ENCODE measurements at regions of chr1 and their contacts with region 1.

Region 1: DNA sequence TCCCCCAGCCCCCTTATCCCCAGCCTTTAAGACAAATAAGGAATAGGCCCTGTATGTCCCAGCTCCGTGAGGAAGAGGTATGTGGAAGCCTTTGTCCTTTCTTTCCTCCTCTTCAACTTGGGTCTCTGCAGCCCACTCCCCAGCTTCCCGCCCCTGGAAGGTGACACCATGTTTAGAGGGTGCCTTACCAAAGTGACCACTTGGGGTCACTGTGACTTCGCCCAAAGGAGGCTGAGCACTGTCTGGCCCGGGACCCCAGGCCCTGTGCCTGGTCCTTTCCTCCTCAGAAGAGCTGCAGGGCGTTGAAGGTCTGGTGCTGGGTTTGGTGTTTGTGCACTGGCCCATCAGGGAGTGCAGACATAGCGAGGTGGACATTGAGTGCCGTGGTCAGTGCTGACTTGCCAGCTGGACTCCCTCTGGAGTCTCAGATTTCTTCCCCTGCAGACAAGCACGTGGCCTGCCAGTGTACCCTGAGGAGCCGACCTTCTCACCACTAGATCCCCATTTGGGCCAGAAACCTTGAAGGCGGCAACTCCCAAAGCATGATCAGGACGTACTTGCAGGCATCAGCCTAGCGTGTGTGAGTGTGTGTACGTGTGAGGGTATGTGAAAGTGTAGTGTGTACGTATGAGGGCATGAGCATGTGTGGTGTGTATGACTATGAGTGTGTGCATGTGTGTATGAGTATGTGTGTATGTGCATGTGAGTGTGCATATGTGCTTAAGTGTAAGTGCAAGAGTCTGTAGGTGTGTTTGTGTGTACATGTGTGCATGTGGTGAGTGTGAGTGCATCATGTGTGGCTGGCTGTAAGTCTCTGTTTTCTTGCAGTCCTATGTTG is 181.4 kb upstream of the KIAA0040 start:
- DNase-seq: no peak
- H3K4me3 ChIP-seq: no peak overlapping the region
- H3K27ac ChIP-seq: no peak overlapping the region
- H3K4me1 ChIP-seq: no peaks in the 10 kb centered on the region
- H3K27me3 ChIP-seq: no peaks in the 10 kb centered on the region
- CTCF ChIP-seq: peak; percentile 51 to 84

Region 2: DNA sequence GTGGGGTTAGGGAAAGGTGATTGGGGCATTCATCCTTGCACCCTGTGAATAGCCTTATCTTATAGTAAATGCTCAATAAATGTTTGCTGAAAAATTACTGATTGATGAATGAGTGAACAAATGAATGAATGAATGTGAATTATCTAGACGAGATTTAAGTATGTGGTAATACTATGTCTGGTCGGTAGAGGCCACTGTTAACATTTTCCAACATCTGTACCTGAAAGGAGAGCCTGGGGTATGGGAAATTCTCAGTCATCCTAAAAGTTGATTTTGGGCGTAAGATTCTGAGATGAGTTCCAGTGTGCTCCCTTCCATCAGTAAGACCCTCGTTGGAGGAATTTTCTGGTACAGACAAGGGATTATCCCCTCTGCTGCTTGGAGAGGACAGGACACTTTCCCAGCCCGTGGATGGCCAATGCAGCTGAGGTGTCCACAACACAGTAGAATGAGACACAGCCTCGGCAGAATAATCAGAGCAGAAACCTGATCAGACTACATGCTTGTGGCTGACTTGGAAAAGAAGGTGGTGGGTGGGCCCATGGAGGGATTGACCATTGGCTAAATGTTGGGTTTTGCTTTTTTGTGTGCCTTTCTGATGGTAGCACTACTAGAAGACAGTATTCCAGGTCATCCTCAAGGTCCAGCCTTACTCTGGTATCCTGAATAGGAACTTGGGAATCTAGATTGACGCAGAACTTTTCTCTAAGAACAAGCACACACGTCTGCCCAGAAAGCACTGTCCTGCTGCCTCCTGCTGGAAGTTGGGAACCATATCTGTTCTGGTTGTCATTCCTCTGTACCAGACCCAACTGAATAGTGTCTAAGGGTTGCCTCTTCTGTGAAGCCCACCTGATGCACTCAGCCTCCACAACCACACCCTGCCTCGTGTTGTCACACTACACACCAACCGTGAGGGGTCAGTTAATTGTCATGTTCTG is 107.4 kb after region 1 on chr1:
- CTCF ChIA-PET with region 1: no interaction called
- dilution Hi-C with region 1: no loop called
- in situ Hi-C with region 1: no loop called
- intact Hi-C with region 1: loop called (anchors 2 kb)
- DNase-seq: peak; percentile 9
- H3K4me3 ChIP-seq: no peak overlapping the region
- H3K27ac ChIP-seq: no peak overlapping the region
- H3K4me1 ChIP-seq: no peaks in the 10 kb centered on the region
- H3K27me3 ChIP-seq: peaks cover 7% of the 10 kb centered on the region
- CTCF ChIP-seq: peak; percentile 51 to 63

Region 3: DNA sequence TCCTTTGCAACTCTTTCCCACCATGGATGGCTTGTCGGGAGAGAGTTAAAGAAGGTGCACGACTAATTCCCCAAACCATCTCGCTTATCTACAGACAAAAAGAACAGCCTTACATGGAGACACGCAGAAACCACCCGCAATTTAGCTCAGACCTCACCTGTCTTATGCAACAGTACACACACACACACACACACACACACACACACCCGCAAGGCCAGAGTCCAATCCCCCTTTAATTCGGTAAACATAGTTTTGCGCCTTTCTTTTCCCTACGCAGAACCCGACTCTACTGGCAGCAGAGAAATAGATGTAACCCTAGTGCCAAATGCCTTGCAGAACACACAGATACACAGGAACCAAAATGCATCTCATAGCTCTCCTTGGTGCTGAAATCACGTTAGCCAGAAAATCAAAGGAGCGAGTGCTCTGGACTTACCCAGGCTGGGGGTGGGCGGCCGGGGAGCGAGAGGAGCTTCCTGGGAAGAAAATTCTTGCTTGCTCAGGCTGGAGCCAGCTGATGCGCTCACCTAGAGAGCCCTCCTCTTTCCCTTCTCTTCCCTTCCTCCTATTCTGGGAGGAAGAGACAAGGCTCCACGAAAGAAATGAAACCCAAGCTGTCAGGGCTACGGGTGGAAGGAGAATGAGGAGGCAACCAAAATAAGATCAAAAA is 368.9 kb after region 1 on chr1:
- CTCF ChIA-PET with region 1: no interaction called
- dilution Hi-C with region 1: no loop called
- in situ Hi-C with region 1: no loop called
- intact Hi-C with region 1: loop called (anchors 5 kb)
- DNase-seq: peak; percentile 45
- H3K4me3 ChIP-seq: no peak overlapping the region
- H3K27ac ChIP-seq: no peak overlapping the region
- H3K4me1 ChIP-seq: no peaks in the 10 kb centered on the region
- H3K27me3 ChIP-seq: no peaks in the 10 kb centered on the region
- CTCF ChIP-seq: no peak

Region 4: GRCh38 chr1:175887981-175888433 is 514.0 kb after region 1 on chr1:
- CTCF ChIA-PET with region 1: no interaction called
- dilution Hi-C with region 1: no loop called
- in situ Hi-C with region 1: no loop called
- intact Hi-C with region 1: loop called (anchors 5 kb)
- DNase-seq: peak; percentile 11
- H3K4me3 ChIP-seq: no peak overlapping the region
- H3K27ac ChIP-seq: no peak overlapping the region
- H3K4me1 ChIP-seq: no peaks in the 10 kb centered on the region
- H3K27me3 ChIP-seq: no peaks in the 10 kb centered on the region
- CTCF ChIP-seq: peak; percentile 91

Region 5: GRCh38 chr1:176073524-176074157 is 699.6 kb after region 1 on chr1:
- CTCF ChIA-PET with region 1: no interaction called
- dilution Hi-C with region 1: no loop called
- in situ Hi-C with region 1: loop called (anchors 25 kb)
- intact Hi-C with region 1: loop called (anchors 2 kb)
- DNase-seq: peak; percentile 48
- H3K4me3 ChIP-seq: no peak overlapping the region
- H3K27ac ChIP-seq: no peak overlapping the region
- H3K4me1 ChIP-seq: no peaks in the 10 kb centered on the region
- H3K27me3 ChIP-seq: no peaks in the 10 kb centered on the region
- CTCF ChIP-seq: peak; percentile 68 to 73

Region 6: GRCh38 chr1:176691251-176692228 is 1317.5 kb after region 1 on chr1:
- CTCF ChIA-PET with region 1: no interaction called
- dilution Hi-C with region 1: no loop called
- in situ Hi-C with region 1: no loop called
- intact Hi-C with region 1: loop called (anchors 10 kb)
- DNase-seq: peak; percentile 49
- H3K4me3 ChIP-seq: no peak overlapping the region
- H3K27ac ChIP-seq: no peak overlapping the region
- H3K4me1 ChIP-seq: peaks cover 1% of the 10 kb centered on the region
- H3K27me3 ChIP-seq: no peaks in the 10 kb centered on the region
- CTCF ChIP-seq: peak; percentile 82 to 85

Region 7: GRCh38 chr1:176880954-176881595 is 1507.1 kb after region 1 on chr1:
- CTCF ChIA-PET with region 1: no interaction called
- dilution Hi-C with region 1: no loop called
- in situ Hi-C with region 1: no loop called
- intact Hi-C with region 1: loop called (anchors 10 kb)
- DNase-seq: peak; percentile 50
- H3K4me3 ChIP-seq: no peak overlapping the region
- H3K27ac ChIP-seq: no peak overlapping the region
- H3K4me1 ChIP-seq: peaks cover 11% of the 10 kb centered on the region
- H3K27me3 ChIP-seq: no peaks in the 10 kb centered on the region
- CTCF ChIP-seq: peak; percentile 73 to 90